ENCODE measurements at regions of chr6 and their contacts with region 1.

Region 1: DNA sequence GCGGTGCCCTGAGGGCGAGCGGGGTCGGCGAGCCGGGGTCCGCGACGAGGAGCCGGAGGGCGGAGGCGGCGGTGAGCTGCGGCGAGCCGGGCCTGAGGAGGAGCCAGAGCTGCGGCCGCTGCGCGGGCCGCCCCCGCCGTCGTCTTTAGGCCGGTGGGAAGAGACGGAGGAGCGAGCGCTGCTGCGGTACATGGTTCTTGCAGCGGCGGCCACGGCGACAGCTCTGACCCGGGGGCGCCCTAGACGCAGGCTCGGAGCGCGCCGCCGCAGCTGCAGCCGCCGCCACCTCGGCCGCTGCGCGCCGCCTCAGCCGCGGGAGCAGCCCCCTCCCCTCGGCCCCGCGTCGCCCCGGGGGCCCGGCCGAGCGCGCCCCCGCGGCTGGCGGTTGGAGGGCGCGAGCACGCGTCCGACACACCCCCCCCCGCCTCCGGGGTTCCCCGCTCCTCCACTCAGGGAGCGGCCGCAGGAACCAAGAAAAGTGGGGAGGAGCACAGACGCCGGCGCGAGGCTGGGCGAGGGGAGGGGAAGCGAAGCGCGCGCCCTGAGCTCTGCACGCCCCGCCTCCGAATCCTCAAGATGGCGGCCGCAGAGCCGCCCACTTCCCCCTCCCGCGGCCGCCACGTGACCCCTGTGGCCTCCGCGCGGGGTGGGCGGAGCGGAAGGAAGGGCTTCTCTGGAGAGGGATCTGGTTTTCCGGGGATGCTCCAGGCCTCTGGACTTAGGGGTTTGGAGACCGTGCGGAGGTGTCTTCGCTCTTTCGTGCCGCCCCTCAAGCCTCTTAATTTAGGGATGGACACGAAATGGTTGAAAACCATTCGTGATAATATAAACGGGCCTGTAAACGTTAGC is at the start of gene ZNF318:
- DNase-seq: peak; percentile 93 to 95 (median 95)
- H3K4me3 ChIP-seq: peak within 1 kb of the TSS; percentile 63 to 69
- H3K4me3 Mint-ChIP-seq: peak within 1 kb of the TSS; percentile 91 to 95 (median 94)
- H3K27ac ChIP-seq: peak within 1 kb of the TSS; percentile 86
- H3K27ac Mint-ChIP-seq: peak within 1 kb of the TSS; percentile 94 to 97 (median 97)
- H3K4me1 ChIP-seq: peaks cover 39% of the 10 kb centered on the region
- H3K4me1 Mint-ChIP-seq: peaks cover 32 to 53% (median 39%) of the 10 kb centered on the region in 4 donors
- H3K27me3 ChIP-seq: no peaks in the 10 kb centered on the region
- H3K27me3 Mint-ChIP-seq: no peaks in the 10 kb centered on the region
- total RNA-seq, gene ZNF318: 30.6 to 32.2 TPM

Region 2: DNA sequence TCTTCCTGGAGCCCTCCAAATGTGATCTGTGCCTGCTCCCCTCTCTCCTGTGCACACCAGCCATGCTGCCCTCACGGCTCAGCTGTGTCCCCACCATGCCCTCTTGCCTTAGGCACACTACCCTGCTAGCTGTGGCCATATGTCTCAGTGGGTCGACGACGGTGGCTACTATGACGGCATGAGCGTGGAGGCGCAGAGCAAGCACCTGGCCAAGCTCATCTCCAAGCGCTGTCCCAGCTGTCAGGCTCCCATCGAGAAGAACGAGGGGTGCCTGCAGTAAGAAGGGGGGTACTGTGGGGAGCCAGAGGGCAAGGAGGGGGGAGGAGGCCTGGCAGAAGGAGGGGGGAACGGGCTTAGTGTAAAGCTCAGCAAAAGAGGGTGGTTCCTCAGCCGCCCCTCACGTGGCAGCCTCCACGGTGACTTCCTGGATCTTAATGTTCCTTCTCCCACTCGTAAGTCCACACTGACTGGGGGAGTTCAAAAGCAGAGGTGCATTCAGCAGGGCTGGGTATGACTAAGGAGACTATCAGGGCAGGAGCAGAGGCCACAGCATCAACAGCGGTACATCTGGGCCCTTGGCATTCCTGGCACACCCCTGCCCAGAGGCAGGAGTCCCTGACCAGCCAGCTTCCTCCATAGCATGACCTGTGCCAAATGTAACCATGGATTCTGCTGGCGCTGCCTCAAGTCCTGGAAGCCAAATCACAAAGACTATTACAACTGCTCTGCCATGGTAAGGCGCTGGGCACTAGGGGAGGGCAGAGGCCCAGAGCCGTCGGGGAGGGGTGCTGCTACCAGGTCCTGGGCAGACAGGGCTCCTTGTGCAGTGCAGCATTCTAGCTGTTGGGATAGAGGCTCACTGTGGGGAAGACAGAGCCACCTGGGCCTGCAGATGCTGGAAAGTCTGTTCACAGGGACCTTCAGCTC is 148.1 kb before region 1 on chr6:
- CTCF ChIA-PET with region 1: no interaction called
- POLR2A ChIA-PET with region 1: interaction called, 12 read pairs
- intact Hi-C with region 1: loop called (anchors 5 kb)
- DNase-seq: no peak
- H3K4me3 ChIP-seq: no peak overlapping the region
- H3K4me3 Mint-ChIP-seq: peak overlapping the region in 3 of 8 donors; percentile 41 to 60 (median 44)
- H3K27ac ChIP-seq: peak overlapping the region; percentile 26
- H3K27ac Mint-ChIP-seq: peak overlapping the region; percentile 82 to 97 (median 85)
- H3K4me1 ChIP-seq: peaks cover 45% of the 10 kb centered on the region
- H3K4me1 Mint-ChIP-seq: peaks cover 23 to 47% (median 35%) of the 10 kb centered on the region in 4 donors
- H3K27me3 ChIP-seq: no peaks in the 10 kb centered on the region
- H3K27me3 Mint-ChIP-seq: no peaks in the 10 kb centered on the region

Region 3: DNA sequence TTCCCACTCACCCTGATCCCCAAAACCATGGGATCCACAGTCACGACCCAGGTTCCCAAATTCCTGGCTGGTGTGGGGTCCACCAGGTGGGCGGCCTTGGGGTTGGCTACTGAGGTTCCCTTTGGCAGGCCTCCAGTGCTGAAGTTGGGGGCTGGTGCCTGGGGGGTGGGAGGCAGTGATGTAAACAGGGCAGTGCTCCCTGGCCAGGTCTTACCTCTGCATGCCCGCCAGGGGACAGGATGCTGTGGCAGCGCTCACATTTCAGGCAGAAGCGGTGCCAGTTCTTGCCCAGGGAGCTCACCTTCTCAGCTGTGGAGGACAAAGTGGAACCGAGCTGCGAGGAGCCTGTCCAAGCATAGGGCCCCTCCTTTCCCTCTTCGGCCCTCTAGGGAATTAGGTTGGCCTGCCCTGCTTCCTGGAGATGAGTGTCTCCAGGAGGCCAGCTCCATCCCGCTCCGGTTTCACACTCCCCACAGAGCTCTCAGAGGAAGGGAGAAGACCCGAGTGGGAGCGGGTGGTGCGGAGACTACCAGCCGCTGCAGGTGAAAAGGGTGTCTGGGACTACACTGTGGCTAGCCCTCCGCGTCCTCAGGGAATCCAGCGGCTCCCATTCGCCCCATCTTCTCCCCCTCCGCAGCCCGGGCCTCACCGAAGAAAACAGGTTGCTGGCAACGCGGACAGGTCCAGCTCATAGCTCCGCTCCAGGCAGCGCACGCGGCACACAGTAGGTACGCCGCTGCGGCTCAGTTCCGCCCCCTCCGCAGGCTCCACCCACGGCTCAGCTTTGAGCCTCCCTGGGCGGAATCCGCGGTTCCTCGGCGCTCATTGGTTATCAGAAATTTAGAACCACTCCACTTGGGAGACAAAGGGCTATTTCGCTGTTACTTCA is 61.1 kb before region 1 on chr6 and contains the start of gene CRIP3:
- CTCF ChIA-PET with region 1: interaction called, 3 read pairs
- POLR2A ChIA-PET with region 1: interaction called, 12 read pairs
- intact Hi-C with region 1: no loop called
- DNase-seq: peak; percentile 42 to 63 (median 46)
- H3K4me3 ChIP-seq: peak within 1 kb of the TSS; percentile 42 to 43
- H3K4me3 Mint-ChIP-seq: peak within 1 kb of the TSS; percentile 75 to 89 (median 84)
- H3K27ac ChIP-seq: no peak within 1 kb of the TSS
- H3K27ac Mint-ChIP-seq: peak within 1 kb of the TSS in 6 of 7 donors; percentile 17 to 88 (median 52)
- H3K4me1 ChIP-seq: peaks cover 14% of the 10 kb centered on the region
- H3K4me1 Mint-ChIP-seq: peaks cover 3 to 12% (median 8%) of the 10 kb centered on the region in 4 donors
- H3K27me3 ChIP-seq: no peaks in the 10 kb centered on the region
- H3K27me3 Mint-ChIP-seq: no peaks in the 10 kb centered on the region
- total RNA-seq, gene CRIP3: 1.9 to 3.0 TPM

Region 4: GRCh38 chr6:43391440-43392031 is 22.1 kb after region 1 on chr6:
- CTCF ChIA-PET with region 1: interaction called, 10 read pairs
- POLR2A ChIA-PET with region 1: interaction called, 18 read pairs
- intact Hi-C with region 1: no loop called
- DNase-seq: peak; percentile 44 to 73 (median 53)
- H3K4me3 ChIP-seq: peak overlapping the region in 1 of 2 donors; percentile 29
- H3K4me3 Mint-ChIP-seq: peak overlapping the region; percentile 12 to 92 (median 82)
- H3K27ac ChIP-seq: no peak overlapping the region
- H3K27ac Mint-ChIP-seq: peak overlapping the region; percentile 29 to 88 (median 65)
- H3K4me1 ChIP-seq: peaks cover 30% of the 10 kb centered on the region
- H3K4me1 Mint-ChIP-seq: peaks cover 24 to 48% (median 34%) of the 10 kb centered on the region in 4 donors
- H3K27me3 ChIP-seq: no peaks in the 10 kb centered on the region
- H3K27me3 Mint-ChIP-seq: peaks cover 0 to 8% of the 10 kb centered on the region in 2 donors

Region 5: GRCh38 chr6:43402820-43403219 is 33.4 kb after region 1 on chr6:
- CTCF ChIA-PET with region 1: interaction called, 10 read pairs
- POLR2A ChIA-PET with region 1: interaction called, 19 read pairs
- intact Hi-C with region 1: loop called (anchors 1 kb)
- DNase-seq: no peak
- H3K4me3 ChIP-seq: no peak overlapping the region
- H3K4me3 Mint-ChIP-seq: no peak overlapping the region
- H3K27ac ChIP-seq: no peak overlapping the region
- H3K27ac Mint-ChIP-seq: no peak overlapping the region
- H3K4me1 ChIP-seq: peaks cover 4% of the 10 kb centered on the region
- H3K4me1 Mint-ChIP-seq: peaks cover under 1 to 3% (median 2%) of the 10 kb centered on the region in 4 donors
- H3K27me3 ChIP-seq: no peaks in the 10 kb centered on the region
- H3K27me3 Mint-ChIP-seq: peaks cover 6 to 11% of the 10 kb centered on the region in 2 donors

Region 6: DNA sequence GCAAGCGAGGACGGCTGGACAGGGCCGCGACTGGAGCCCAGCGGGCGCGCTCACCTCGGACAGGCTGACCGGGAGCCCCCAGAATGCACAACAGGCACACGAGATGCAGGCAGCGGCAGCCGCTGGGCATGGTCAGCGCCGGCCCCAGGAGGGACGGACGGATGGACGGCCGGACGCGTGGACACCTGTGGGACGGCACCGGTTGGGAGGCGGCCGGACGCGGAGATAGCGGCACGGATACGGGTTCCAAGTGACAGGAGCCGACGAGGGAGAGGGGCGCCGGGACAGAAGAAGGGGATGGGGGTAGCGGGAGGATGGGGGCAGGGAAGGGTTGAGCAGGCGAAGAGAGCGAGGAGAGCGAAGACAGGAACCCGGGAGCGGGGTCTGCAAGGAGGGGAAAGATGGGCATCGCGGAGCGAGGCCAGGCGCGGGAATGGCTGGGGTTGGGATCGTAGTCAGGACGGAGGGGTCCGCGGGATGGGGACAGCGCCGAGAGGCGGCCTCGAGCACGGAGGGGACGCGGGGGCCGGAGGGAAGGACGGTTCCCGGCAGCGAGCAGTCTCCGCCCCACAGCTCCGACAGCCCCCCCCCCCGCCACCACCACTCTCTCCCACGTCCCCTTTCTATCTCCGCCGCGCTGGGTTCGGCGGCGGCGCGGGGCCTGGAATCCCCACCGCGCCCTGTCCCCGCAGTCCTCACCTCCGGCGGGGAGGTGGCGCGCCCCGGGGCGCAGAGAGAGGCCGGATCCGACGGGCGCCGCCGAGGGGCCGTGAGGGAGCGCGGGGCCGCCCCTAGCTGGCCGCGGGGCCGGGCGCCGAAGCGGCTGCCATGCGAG is 85.5 kb after region 1 on chr6:
- CTCF ChIA-PET with region 1: no interaction called
- POLR2A ChIA-PET with region 1: interaction called, 3 read pairs
- intact Hi-C with region 1: loop called (anchors 10 kb)
- DNase-seq: peak; percentile 26 to 50 (median 31)
- H3K4me3 ChIP-seq: peak overlapping the region; percentile 52 to 68
- H3K4me3 Mint-ChIP-seq: peak overlapping the region; percentile 62 to 88 (median 84)
- H3K27ac ChIP-seq: peak overlapping the region; percentile 36
- H3K27ac Mint-ChIP-seq: peak overlapping the region in 6 of 7 donors; percentile 10 to 86 (median 76)
- H3K4me1 ChIP-seq: peaks cover 15% of the 10 kb centered on the region
- H3K4me1 Mint-ChIP-seq: peaks cover 7 to 23% (median 10%) of the 10 kb centered on the region in 4 donors
- H3K27me3 ChIP-seq: no peaks in the 10 kb centered on the region
- H3K27me3 Mint-ChIP-seq: peaks cover 2 to 5% of the 10 kb centered on the region in 2 donors

Region 7: DNA sequence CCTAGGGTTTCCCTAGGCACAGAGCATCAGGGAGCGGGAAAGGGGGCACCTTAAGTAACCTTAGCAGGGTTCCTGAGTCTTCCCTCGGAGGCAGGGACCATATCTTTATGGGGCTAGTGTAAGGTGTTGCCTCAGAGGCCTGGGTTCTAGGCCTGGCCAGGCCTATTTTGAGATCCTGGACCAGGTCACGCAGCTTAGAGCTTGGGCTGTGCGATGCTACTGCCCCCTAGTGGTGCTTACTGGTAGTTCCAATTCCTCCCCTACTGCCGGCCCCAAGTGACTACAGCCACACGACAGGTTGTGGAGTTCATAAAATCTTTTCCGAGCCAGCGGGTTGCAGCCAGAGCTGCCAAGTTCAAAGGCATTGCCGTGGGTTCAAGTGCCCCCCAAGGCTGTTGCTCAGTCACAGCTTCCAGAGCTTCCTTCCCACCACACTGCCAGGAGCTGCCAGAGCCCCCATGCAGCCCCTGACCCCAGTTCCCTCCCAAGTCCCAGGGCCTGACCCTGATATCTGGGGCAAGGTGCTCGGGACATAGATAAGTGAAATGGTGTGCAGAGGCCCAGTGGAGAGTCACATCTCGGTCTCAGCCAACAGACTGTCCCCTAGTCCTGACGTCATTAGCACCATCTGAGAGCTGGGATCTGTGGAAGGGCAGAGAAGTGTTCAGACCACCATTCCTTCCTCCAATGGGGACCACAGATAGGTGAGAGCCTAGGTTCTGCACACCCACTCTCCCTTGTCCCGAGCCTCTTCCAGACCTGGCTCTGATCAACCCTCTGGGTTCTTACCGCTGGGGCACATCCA is 137.5 kb after region 1 on chr6:
- CTCF ChIA-PET with region 1: interaction called, 5 read pairs
- POLR2A ChIA-PET with region 1: no interaction called
- intact Hi-C with region 1: loop called (anchors 5 kb)
- DNase-seq: peak; percentile 73 to 79 (median 77)
- H3K4me3 ChIP-seq: no peak overlapping the region
- H3K4me3 Mint-ChIP-seq: peak overlapping the region in 1 of 8 donors; percentile 70
- H3K27ac ChIP-seq: peak overlapping the region; percentile 8
- H3K27ac Mint-ChIP-seq: peak overlapping the region in 6 of 7 donors; percentile 31 to 86 (median 69)
- H3K4me1 ChIP-seq: peaks cover 17% of the 10 kb centered on the region
- H3K4me1 Mint-ChIP-seq: peaks cover 8 to 37% (median 18%) of the 10 kb centered on the region in 4 donors
- H3K27me3 ChIP-seq: peaks cover 11% of the 10 kb centered on the region
- H3K27me3 Mint-ChIP-seq: peaks cover 9 to 13% of the 10 kb centered on the region in 2 donors